ENCODE measurements at regions of chr5 and their contacts with region 1.

Region 1: DNA sequence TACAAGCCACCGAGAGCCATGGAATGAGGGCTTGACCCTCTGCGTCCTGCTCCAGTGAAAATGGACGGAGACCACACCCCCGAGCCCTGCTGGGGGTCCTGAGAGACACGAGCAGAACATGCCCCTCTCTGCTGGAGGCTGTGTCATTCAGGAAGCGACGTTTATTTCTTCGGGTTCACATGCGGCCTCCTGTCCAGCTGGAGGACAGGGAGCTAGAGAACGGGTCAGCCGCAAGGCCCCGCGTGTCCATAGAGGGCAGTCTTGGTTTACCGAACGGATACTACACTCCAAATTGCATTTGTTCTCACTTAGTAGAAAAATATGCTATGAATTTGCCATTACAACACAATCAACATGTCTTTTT is 36.1 kb downstream of the MRPL36 start:
- DNase-seq: peak; percentile 54

Region 2: DNA sequence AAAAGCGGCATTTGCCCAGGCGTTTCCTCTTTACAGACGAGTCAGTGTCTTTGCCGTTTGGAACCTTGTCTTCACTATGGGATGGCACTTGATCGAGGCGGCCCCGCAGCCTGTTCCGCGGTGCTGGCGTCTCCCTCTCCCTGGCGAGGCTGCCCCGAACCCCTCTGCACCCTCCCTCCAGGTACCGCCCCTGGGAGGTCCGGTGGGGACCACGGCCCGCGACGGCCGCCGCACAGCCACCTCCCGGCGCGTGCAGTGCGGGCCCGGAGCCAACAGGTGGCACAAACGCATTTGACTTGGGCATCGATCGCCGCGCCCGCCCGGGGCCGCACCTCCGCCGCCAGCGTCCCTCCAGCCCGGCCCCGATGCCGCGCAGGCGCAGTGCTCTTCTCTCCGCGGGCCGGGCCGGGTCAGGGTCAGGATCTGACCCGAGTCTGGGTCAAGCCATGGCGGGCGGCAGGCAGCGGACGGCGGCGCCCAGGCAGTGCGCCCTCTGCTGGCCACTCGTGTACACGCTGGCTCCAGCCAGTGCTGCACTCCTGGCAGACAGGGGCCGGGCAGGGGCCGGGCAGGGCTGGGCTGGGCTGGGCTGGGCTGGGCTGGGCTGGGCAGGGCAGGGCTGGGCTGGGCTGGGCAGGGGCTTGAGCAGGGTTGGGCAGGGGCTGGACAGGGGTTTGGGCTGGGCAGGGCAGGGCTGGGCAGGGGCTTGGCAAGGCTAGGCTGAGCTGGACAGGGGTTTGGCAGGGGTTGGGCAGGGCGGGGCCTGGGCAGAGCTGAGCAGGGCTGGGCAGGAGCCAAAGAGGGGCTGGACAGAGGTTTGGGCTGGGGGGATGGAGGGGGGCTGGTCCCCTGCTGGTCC is 275.0 kb after region 1 on chr5:
- intact Hi-C with region 1: loop called (anchors 2 kb)
- DNase-seq: peak; percentile 89

Region 3: GRCh38 chr5:2134543-2135292 is 371.2 kb after region 1 on chr5:
- intact Hi-C with region 1: no loop called
- DNase-seq: peak; percentile 47

Region 4: DNA sequence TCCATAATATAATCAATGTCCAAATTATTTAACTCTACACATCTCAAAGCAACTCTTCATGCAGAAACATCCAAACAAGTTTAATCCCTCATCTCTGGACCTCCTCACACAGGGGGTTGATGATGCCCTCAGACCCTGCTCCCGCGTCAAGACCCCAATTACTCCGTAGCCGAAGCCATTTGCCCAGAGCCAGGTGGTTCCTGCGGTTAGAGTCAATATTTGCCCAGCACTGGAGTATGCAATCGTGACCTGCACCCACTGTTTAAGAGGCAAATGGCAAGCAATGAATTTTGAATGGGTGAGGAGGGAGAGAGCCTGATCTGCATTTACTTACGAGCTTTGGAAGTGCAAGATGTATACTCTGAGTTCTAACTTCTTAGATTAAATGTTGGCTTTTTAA is 391.2 kb after region 1 on chr5:
- intact Hi-C with region 1: loop called (anchors 5 kb)
- DNase-seq: no peak

Measured in cardiac septum (tissue), 1 donor.